ENCODE measurements at regions of chr16 and their contacts with region 1.

Region 1: GRCh38 chr16:24568392-24568791 is 29.0 kb downstream of the RBBP6 start:
- DNase-seq: no peak
- H3K4me3 Mint-ChIP-seq: no peak overlapping the region
- H3K27ac Mint-ChIP-seq: no peak overlapping the region
- H3K4me1 Mint-ChIP-seq: no peaks in the 10 kb centered on the region
- H3K27me3 Mint-ChIP-seq: no peaks in the 10 kb centered on the region
- CTCF ChIP-seq: peak; percentile 32

Region 2: DNA sequence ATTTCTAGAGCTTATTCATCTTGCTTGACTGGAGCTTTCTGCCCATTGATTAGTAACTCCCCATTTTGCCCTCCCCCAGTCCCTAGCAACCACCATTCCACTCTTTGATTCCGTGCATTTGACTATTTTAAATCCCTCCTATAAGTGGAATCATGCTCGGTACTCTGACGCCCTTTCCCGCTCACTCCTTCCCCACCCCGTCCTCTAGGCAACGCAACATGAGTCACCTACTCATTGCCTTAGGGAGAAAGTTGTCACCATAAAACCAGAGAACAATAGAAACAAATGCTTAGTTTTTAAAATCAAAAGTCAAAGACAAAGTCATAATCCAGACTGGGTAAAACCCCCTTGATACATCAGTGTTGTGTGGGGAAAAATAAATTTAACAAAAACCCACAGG is 74.5 kb before region 1 on chr16:
- CTCF ChIA-PET with region 1: no interaction called
- intact Hi-C with region 1: no loop called
- DNase-seq: no peak
- H3K4me3 Mint-ChIP-seq: no peak overlapping the region
- H3K27ac Mint-ChIP-seq: no peak overlapping the region
- H3K4me1 Mint-ChIP-seq: no peaks in the 10 kb centered on the region
- H3K27me3 Mint-ChIP-seq: peaks cover 93% of the 10 kb centered on the region
- CTCF ChIP-seq: no peak

Region 3: DNA sequence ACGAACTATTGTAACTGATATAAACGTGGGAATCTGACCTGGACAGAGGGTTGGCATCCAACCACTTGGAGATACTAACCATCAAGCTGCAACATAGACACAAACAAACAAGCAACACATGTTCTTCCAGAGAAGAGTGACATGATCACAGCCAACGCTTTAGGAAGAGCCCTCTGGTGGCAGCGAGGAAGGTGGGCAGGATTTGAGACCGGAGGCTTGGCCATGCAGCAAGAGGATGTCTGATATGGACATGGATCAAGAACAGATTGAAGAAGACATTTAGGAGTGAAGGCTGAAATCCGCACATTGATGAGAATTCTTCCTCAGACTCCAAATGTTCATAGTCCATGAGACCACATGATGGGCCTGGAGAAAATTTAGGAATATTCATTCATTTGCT is 120.8 kb after region 1 on chr16:
- CTCF ChIA-PET with region 1: no interaction called
- intact Hi-C with region 1: loop called (anchors 1 kb)
- DNase-seq: peak; percentile 48
- H3K4me3 Mint-ChIP-seq: no peak overlapping the region
- H3K27ac Mint-ChIP-seq: no peak overlapping the region
- H3K4me1 Mint-ChIP-seq: peaks cover 10% of the 10 kb centered on the region
- H3K27me3 Mint-ChIP-seq: no peaks in the 10 kb centered on the region
- CTCF ChIP-seq: peak; percentile 67

Region 4: DNA sequence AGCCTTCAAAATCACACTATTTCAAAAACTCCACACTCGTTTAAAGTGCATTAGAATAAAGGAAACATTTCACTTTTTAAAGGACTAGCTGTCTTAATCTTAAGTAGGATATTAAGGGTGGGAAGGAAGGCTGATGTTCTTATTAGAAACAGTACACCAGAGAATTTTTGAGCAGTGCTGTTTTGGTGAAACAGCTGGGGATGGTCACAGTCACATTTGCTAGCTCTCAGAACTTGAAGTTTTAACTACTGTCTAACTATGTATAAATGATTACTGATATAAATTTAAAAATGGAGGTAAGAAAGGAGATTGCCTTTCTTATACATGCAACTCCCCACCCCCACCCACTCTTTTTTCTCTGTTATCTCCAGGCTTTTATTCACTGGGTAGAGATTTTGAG is 238.9 kb after region 1 on chr16:
- CTCF ChIA-PET with region 1: no interaction called
- intact Hi-C with region 1: loop called (anchors 5 kb)
- DNase-seq: no peak
- H3K4me3 Mint-ChIP-seq: no peak overlapping the region
- H3K27ac Mint-ChIP-seq: no peak overlapping the region
- H3K4me1 Mint-ChIP-seq: no peaks in the 10 kb centered on the region
- H3K27me3 Mint-ChIP-seq: no peaks in the 10 kb centered on the region
- CTCF ChIP-seq: no peak

Measured in Calu3 (cell line).